ENCODE measurements at regions of chr3 and their contacts with region 1.

Region 1: DNA sequence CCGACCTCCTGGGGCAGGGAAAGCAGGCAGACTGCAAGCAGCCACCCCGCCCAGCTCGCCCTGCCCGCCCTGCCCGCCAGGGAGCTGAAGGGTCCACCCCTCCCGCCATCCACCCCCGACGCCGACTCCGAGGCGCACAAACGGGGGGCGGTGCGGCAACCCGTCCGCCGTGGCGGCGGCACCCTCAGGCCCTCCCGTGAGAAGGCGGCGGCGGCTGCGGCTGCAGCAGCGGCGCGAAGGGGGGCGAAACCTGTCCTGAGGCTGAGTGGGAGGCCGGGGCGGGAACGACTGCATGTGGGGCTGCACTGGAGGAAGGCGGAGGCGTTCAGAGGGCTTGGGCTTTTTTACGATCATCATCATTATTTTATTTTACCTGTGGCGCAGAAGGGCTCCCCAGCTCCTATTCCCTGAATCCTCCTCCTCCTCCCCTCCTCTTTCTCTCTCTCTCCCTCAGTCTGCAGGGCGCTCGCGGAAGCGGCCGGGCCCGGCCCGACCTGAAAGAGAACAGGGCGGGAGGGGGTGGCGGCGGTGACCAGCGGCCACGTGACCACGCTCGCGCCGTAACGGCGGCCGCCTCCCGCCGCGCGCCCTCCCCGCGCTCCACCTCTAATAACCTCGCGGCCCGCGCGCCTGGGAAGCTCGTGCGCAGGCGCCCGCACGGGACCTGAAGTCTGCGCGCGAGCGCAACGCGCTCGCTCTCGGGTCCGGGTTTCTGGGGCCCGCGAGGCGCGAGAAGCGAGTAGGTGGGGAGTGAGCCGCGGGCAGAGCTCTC is at the start of gene TBC1D5:
- DNase-seq: peak; percentile 95
- H3K4me3 Mint-ChIP-seq: peak within 1 kb of the TSS; percentile 92
- H3K27ac Mint-ChIP-seq: peak within 1 kb of the TSS; percentile 94
- H3K4me1 Mint-ChIP-seq: peaks cover 40% of the 10 kb centered on the region
- H3K27me3 Mint-ChIP-seq: no peaks in the 10 kb centered on the region
- total RNA-seq, gene TBC1D5: 54.4 to 57.2 TPM

Region 2: DNA sequence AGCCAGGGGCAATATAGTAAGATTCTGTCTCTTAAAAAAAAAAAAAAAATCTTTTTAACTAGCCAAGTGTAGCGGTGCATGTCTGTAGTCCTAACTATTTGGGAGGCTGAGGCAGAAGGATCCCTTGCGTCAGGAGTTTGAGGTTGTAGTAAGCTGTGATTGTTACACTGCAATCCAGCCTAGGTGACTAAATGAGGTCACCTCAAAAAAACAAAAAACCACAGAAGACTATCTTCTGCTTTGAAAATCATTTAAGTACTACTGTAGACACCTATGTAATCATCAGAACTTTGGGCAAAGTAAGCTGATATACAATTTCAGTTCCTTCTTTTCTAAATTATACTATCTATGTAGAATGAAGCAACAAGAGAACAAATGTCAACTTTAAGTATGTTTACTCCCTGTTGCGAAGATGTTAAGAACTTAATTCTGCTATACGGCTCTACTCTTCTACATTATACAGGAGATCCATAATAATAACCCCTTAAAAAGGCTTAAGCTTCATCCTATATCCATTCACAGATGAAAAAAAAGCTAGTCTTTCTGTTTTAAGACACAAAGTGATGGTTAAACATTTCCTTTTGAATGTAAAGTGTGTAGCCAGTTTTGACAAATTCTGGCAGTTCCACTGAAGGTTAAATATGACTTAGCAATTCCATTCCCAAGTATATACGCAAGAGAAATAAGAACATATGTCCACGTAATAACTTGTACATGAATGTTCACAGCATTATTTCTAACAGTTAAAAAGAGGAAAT is 1152.2 kb before region 1 on chr3:
- CTCF ChIA-PET with region 1: no interaction called
- intact Hi-C with region 1: loop called (anchors 10 kb)
- DNase-seq: no peak
- H3K4me3 Mint-ChIP-seq: no peak overlapping the region
- H3K27ac Mint-ChIP-seq: no peak overlapping the region
- H3K4me1 Mint-ChIP-seq: peaks cover 12% of the 10 kb centered on the region
- H3K27me3 Mint-ChIP-seq: peaks cover 2% of the 10 kb centered on the region

Region 3: GRCh38 chr3:17032407-17033034 is 709.8 kb before region 1 on chr3:
- CTCF ChIA-PET with region 1: no interaction called
- intact Hi-C with region 1: no loop called
- DNase-seq: no peak
- H3K4me3 Mint-ChIP-seq: no peak overlapping the region
- H3K27ac Mint-ChIP-seq: no peak overlapping the region
- H3K4me1 Mint-ChIP-seq: peaks cover 75% of the 10 kb centered on the region
- H3K27me3 Mint-ChIP-seq: no peaks in the 10 kb centered on the region

Region 4: GRCh38 chr3:17151598-17152373 is 590.5 kb before region 1 on chr3:
- CTCF ChIA-PET with region 1: no interaction called
- intact Hi-C with region 1: loop called (anchors 10 kb)
- DNase-seq: peak; percentile 95
- H3K4me3 Mint-ChIP-seq: peak overlapping the region; percentile 28
- H3K27ac Mint-ChIP-seq: peak overlapping the region; percentile 85
- H3K4me1 Mint-ChIP-seq: peaks cover 25% of the 10 kb centered on the region
- H3K27me3 Mint-ChIP-seq: no peaks in the 10 kb centered on the region

Region 5: GRCh38 chr3:17639765-17640164 is 102.5 kb before region 1 on chr3:
- CTCF ChIA-PET with region 1: no interaction called
- intact Hi-C with region 1: loop called (anchors 2 kb)
- DNase-seq: no peak
- H3K4me3 Mint-ChIP-seq: no peak overlapping the region
- H3K27ac Mint-ChIP-seq: no peak overlapping the region
- H3K4me1 Mint-ChIP-seq: peaks cover 25% of the 10 kb centered on the region
- H3K27me3 Mint-ChIP-seq: no peaks in the 10 kb centered on the region

Region 6: GRCh38 chr3:17802821-17803392 is 60.6 kb after region 1 on chr3:
- CTCF ChIA-PET with region 1: no interaction called
- intact Hi-C with region 1: loop called (anchors 10 kb)
- DNase-seq: no peak
- H3K4me3 Mint-ChIP-seq: no peak overlapping the region
- H3K27ac Mint-ChIP-seq: no peak overlapping the region
- H3K4me1 Mint-ChIP-seq: peaks cover 8% of the 10 kb centered on the region
- H3K27me3 Mint-ChIP-seq: no peaks in the 10 kb centered on the region

Region 7: GRCh38 chr3:18007980-18008379 is 265.7 kb after region 1 on chr3:
- CTCF ChIA-PET with region 1: no interaction called
- intact Hi-C with region 1: no loop called
- DNase-seq: no peak
- H3K4me3 Mint-ChIP-seq: no peak overlapping the region
- H3K27ac Mint-ChIP-seq: no peak overlapping the region
- H3K4me1 Mint-ChIP-seq: no peaks in the 10 kb centered on the region
- H3K27me3 Mint-ChIP-seq: peaks cover 5% of the 10 kb centered on the region